ENCODE measurements at regions of chr7 and their contacts with region 1.

Region 1: GRCh38 chr7:133230591-133231194 is 22.2 kb upstream of the EXOC4 start:
- DNase-seq: peak; percentile 75
- ATAC-seq: peak; percentile 45
- H3K4me3 ChIP-seq: no peak overlapping the region
- H3K27ac ChIP-seq: no peak overlapping the region
- H3K4me1 ChIP-seq: no peaks in the 10 kb centered on the region
- H3K27me3 ChIP-seq: peaks cover 27% of the 10 kb centered on the region; the same call in 1 of the 2 replicates
- CTCF ChIP-seq: peak; percentile 86

Region 2: DNA sequence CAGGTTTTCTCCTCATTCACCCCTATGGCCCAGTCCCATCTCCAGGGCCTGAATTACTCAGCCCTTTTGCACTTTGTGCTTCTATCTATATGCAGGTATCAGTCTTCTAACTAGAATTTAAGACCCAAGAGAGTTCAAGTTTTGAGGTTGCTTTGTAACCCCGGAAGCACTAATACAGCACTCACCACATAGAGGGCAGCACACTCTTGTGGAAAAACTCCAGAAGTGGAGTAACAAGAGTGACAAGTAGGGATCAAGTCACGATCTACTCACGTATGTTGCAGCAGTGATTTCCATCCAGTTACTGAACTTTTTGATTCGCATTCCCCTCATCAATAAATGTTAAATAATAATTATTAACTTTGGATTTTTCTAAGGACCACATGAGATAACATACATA is 299.8 kb before region 1 on chr7:
- CTCF ChIA-PET with region 1: no interaction called
- POLR2A ChIA-PET with region 1: no interaction called
- intact Hi-C with region 1: loop called (anchors 2 kb)
- DNase-seq: peak; percentile 17
- ATAC-seq: peak; percentile 38; the same call in 1 of the 2 replicates
- H3K4me3 ChIP-seq: no peak overlapping the region
- H3K27ac ChIP-seq: no peak overlapping the region
- H3K4me1 ChIP-seq: no peaks in the 10 kb centered on the region
- H3K27me3 ChIP-seq: no peaks in the 10 kb centered on the region
- CTCF ChIP-seq: peak; percentile 60

Region 3: DNA sequence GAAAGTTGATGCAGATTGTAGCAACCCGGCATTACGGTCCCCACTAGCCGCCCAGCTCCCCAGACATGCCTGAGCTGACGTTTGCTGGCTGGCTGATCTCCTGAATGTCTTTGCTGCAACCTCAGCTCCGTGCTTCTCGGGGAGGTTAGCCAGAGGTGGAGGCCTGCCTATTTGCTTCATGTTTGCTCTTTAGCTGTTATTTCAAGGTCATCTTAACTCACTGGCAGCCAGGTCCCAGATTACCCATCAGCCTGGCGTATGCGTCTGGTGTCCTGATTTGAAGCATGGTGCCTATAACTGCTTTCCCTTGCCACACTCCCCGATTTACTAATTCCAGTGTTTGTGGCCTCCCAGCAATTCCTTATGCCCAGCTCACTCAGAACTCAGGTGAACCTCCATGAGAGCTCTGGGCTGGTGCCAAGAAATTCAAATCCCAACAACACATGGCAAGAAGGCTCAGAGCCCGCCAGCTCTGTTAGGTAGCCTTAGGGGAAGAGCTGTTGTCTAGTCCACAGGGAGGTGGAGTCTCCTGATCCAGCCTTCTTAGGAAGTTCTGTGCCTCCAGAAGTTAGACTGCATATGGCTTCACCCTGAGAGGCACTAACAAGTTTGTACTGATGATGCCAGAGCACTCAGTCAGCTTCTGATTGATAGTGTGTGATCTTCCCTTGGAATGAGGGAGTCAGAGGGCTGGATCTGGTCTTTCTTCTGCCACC is 47.5 kb before region 1 on chr7:
- CTCF ChIA-PET with region 1: no interaction called
- POLR2A ChIA-PET with region 1: no interaction called
- intact Hi-C with region 1: loop called (anchors 1 kb)
- DNase-seq: no peak
- ATAC-seq: no peak
- H3K4me3 ChIP-seq: no peak overlapping the region
- H3K27ac ChIP-seq: no peak overlapping the region
- H3K4me1 ChIP-seq: peaks cover 8% of the 10 kb centered on the region; the same call in 1 of the 2 replicates
- H3K27me3 ChIP-seq: peaks cover 37% of the 10 kb centered on the region
- CTCF ChIP-seq: no peak

Region 4: GRCh38 chr7:133662830-133663229 is 432.1 kb after region 1 on chr7:
- CTCF ChIA-PET with region 1: interaction called, 13 read pairs
- POLR2A ChIA-PET with region 1: no interaction called
- intact Hi-C with region 1: no loop called
- DNase-seq: no peak
- ATAC-seq: no peak
- H3K4me3 ChIP-seq: no peak overlapping the region
- H3K27ac ChIP-seq: no peak overlapping the region
- H3K4me1 ChIP-seq: peaks cover 3% of the 10 kb centered on the region; the same call in 1 of the 2 replicates
- H3K27me3 ChIP-seq: no peaks in the 10 kb centered on the region
- CTCF ChIP-seq: no peak